Colonic mucosa (tissue), 4 donors: ENCODE measurements at regions of chr11 and their contacts with region 1.

Region 1: GRCh38 chr11:97140885-97141494 is 751.2 kb downstream of the JRKL start:
- DNase-seq: no peak
- H3K4me3 ChIP-seq: no peak overlapping the region
- H3K27ac ChIP-seq: no peak overlapping the region
- H3K4me1 ChIP-seq: no peaks in the 10 kb centered on the region
- H3K27me3 ChIP-seq: no peaks in the 10 kb centered on the region
- CTCF ChIP-seq: peak; percentile 44

Region 2: GRCh38 chr11:96464700-96465307 is 676.2 kb before region 1 on chr11:
- intact Hi-C with region 1: loop called (anchors 5 kb)
- DNase-seq: no peak
- H3K4me3 ChIP-seq: no peak overlapping the region
- H3K27ac ChIP-seq: no peak overlapping the region
- H3K4me1 ChIP-seq: peaks cover 3% of the 10 kb centered on the region
- H3K27me3 ChIP-seq: no peaks in the 10 kb centered on the region
- CTCF ChIP-seq: peak; percentile 58

Region 3: GRCh38 chr11:97548280-97548679 is 407.3 kb after region 1 on chr11:
- intact Hi-C with region 1: no loop called
- DNase-seq: no peak
- H3K4me3 ChIP-seq: no peak overlapping the region
- H3K27ac ChIP-seq: no peak overlapping the region
- H3K4me1 ChIP-seq: no peaks in the 10 kb centered on the region
- H3K27me3 ChIP-seq: no peaks in the 10 kb centered on the region
- CTCF ChIP-seq: no peak